Activated B cell treated with CpG ODN at 0.5 μM for 24 hours (primary cell): ENCODE measurements at regions of chr1 and their contacts with region 1.

Region 1: GRCh38 chr1:94463765-94464330 is 45.7 kb downstream of the ABCD3 start:
- DNase-seq: no peak
- ATAC-seq: no peak
- H3K4me3 Mint-ChIP-seq: no peak overlapping the region
- H3K27ac Mint-ChIP-seq: no peak overlapping the region
- H3K4me1 Mint-ChIP-seq: no peaks in the 10 kb centered on the region
- H3K27me3 Mint-ChIP-seq: no peaks in the 10 kb centered on the region
- CTCF ChIP-seq: no peak

Region 2: GRCh38 chr1:93437976-93438605 is 1025.8 kb before region 1 on chr1:
- CTCF ChIA-PET with region 1: no interaction called
- POLR2A ChIA-PET with region 1: no interaction called
- intact Hi-C with region 1: loop called (anchors 5 kb)
- DNase-seq: no peak
- ATAC-seq: peak; percentile 76
- H3K4me3 Mint-ChIP-seq: no peak overlapping the region
- H3K27ac Mint-ChIP-seq: no peak overlapping the region
- H3K4me1 Mint-ChIP-seq: peaks cover 3% of the 10 kb centered on the region
- H3K27me3 Mint-ChIP-seq: peaks cover 3% of the 10 kb centered on the region
- CTCF ChIP-seq: no peak

Region 3: DNA sequence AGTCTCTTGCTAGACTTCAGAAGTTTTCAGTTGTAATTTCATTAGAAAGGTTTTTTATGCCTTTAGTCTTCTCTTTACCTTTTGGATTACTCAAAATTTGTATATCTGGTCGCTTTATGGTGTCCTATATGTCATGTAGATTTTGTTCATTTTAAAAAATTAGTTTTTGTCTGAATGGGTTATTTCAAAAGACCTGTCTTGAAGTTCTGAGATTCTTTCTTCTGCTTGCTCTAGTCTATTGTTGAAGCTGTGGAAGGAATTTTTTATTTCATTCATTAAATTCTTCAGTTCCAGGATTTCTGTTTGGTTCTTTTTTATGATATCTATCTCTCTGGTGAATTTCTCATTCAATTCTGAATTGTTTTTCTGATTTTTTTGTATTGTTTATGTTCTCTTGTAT is 508.1 kb before region 1 on chr1:
- CTCF ChIA-PET with region 1: no interaction called
- POLR2A ChIA-PET with region 1: no interaction called
- intact Hi-C with region 1: no loop called
- DNase-seq: no peak
- ATAC-seq: no peak
- H3K4me3 Mint-ChIP-seq: no peak overlapping the region
- H3K27ac Mint-ChIP-seq: no peak overlapping the region
- H3K4me1 Mint-ChIP-seq: no peaks in the 10 kb centered on the region
- H3K27me3 Mint-ChIP-seq: peaks cover 15% of the 10 kb centered on the region
- CTCF ChIP-seq: no peak

Region 4: DNA sequence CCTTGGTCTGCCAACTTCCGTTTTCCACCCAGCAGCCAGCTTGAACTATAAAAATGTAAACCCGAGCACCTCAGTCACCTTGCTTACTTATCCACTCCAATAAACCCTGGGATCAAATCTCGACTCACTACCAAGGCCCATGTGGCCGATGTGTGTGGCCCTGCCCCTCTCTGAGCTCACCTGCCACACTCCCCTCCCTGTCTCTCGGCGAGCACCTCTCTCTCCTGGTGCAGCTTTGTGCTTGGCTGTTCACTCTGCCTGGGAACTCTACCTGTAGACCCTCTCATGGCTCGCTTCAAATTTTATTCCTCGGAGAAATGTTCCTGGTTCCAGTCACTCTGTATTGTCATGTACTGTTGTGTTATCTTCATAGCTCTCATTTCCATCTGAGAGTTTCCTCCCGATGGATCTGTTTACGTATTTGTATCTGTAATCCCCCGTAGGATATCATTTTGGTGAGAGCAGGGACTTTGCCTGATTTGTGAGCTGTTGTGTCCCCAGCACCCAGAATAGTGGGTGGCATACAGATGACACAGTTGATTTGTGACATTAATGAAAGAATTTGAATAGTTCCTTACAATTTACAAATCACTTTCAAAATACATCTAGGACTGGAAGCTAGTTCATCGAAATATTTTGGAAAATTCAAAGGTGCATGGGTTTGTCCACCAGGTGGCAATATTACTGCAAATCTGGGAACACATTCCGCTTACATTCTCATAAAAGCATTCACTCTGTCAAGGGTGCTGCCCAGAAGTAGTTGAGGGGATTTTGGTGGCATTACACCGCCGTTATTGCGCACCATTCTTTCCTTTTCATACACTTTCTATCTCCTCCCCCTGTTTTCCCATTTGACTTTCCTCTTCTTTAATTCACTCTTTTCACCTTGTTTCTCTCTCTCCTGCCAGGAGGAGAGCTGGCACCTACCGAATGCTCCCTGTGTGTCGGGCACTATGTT is 438.2 kb before region 1 on chr1:
- CTCF ChIA-PET with region 1: interaction called, 6 read pairs
- POLR2A ChIA-PET with region 1: no interaction called
- intact Hi-C with region 1: loop called (anchors 1 kb)
- DNase-seq: no peak
- ATAC-seq: no peak
- H3K4me3 Mint-ChIP-seq: no peak overlapping the region
- H3K27ac Mint-ChIP-seq: no peak overlapping the region
- H3K4me1 Mint-ChIP-seq: no peaks in the 10 kb centered on the region
- H3K27me3 Mint-ChIP-seq: peaks cover 6% of the 10 kb centered on the region
- CTCF ChIP-seq: no peak

Region 5: GRCh38 chr1:94039514-94039870 is 424.4 kb before region 1 on chr1:
- CTCF ChIA-PET with region 1: interaction called, 34 read pairs
- POLR2A ChIA-PET with region 1: no interaction called
- intact Hi-C with region 1: no loop called
- DNase-seq: no peak
- ATAC-seq: no peak
- H3K4me3 Mint-ChIP-seq: no peak overlapping the region
- H3K27ac Mint-ChIP-seq: no peak overlapping the region
- H3K4me1 Mint-ChIP-seq: peaks cover 4% of the 10 kb centered on the region
- H3K27me3 Mint-ChIP-seq: peaks cover 32% of the 10 kb centered on the region
- CTCF ChIP-seq: no peak

Region 6: DNA sequence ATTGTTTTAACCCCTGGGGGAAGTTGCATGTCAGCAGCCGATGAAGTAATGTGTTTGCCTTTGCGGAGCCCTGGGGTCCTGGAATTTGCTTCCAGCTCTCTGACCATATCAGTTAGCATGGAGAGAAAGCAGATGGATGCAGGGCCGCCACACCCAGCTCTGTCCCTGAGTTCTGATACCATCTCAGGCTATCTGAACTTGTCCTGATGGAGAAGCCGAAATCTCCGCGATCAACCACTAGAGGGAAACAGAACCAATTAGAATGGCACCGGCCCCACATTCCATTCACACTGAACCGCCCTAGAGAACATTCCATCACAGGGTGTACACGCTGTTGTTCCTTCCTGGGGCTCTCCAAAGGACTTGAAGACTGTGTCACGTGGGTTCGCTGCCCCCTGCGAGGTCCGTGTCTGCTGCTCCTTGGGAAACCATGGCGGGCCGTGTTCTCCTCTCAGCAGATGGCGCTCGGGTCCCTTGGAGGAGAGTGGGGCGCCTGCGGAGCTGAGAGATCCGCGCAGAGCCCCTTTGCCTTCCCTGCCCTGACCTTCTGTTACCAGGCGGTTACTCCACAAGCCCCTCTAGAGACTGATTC is 418.3 kb before region 1 on chr1:
- CTCF ChIA-PET with region 1: interaction called, 34 read pairs
- POLR2A ChIA-PET with region 1: no interaction called
- intact Hi-C with region 1: loop called (anchors 1 kb)
- DNase-seq: no peak
- ATAC-seq: no peak
- H3K4me3 Mint-ChIP-seq: peak overlapping the region; percentile 46
- H3K27ac Mint-ChIP-seq: no peak overlapping the region
- H3K4me1 Mint-ChIP-seq: peaks cover 9% of the 10 kb centered on the region
- H3K27me3 Mint-ChIP-seq: peaks cover 19% of the 10 kb centered on the region
- CTCF ChIP-seq: no peak

Region 7: DNA sequence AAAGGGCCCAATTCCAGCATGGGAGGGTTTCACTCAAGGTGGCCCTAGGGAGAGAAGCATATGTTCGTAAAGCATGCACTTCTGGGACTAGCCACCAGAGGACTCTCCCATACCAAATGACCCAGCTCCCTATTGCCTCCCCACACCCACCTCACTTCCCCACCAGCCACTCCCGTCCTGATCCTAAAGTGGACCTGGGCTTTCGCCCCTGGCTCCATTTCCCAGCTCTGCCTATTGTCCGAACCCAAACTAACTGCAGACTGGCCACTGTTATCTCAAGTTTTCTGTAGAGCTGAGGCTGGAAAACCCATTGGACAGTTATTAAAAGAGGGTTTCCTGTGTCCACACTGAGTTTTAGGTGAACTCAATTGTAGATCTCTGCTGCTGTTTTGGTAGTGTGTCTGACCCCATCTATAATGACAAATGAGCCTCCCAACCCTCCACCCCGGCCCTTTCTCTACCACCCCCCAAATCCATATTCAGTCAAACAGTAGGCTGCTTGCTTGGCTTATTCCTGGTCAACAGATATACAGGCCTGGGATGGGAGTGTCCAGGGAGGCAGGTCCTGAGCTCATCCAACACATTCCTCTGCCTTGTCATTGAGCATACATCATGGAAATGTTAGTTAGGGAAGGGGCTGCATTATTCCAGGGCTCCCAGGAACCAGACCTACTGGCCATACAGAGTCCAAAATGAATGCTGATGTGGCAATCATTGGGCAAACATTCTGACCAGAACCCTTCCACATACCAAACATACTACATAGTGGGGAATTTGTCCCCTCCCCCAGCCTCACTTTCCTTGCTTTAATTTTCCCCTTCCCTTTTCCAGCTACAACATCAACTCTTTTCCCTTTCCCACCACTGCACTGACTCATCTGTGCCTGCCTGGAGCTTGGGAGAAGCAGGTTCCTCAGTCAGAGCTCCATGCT is 402.1 kb before region 1 on chr1:
- CTCF ChIA-PET with region 1: interaction called, 22 read pairs
- POLR2A ChIA-PET with region 1: no interaction called
- intact Hi-C with region 1: loop called (anchors 1 kb)
- DNase-seq: no peak
- ATAC-seq: peak; percentile 47
- H3K4me3 Mint-ChIP-seq: no peak overlapping the region
- H3K27ac Mint-ChIP-seq: no peak overlapping the region
- H3K4me1 Mint-ChIP-seq: no peaks in the 10 kb centered on the region
- H3K27me3 Mint-ChIP-seq: peaks cover 9% of the 10 kb centered on the region
- CTCF ChIP-seq: no peak

Region 8: DNA sequence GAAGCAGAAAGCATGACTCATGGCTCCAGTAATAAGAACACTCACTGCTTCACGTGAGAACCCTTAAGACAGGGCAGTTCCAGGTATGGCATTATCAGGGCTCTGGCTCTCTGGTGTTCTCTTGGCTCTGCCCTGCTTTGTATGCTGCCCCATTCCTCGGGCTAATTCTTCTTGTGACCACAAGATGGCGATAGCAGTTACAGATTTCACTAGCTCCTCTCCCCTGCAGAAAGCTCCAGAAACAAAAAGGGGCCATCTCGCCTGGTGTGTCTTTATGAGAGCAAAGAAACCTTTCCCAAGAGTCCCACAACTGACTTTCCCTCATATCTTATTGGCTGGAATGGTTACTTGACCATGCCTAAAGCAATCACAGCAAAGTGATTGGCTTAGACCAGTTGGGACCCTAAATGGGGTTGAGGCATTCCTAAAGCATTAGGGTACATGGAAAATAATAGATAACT is 17.7 kb after region 1 on chr1:
- CTCF ChIA-PET with region 1: interaction called, 20 read pairs
- POLR2A ChIA-PET with region 1: no interaction called
- intact Hi-C with region 1: no loop called
- DNase-seq: no peak
- ATAC-seq: peak; percentile 71
- H3K4me3 Mint-ChIP-seq: no peak overlapping the region
- H3K27ac Mint-ChIP-seq: no peak overlapping the region
- H3K4me1 Mint-ChIP-seq: no peaks in the 10 kb centered on the region
- H3K27me3 Mint-ChIP-seq: no peaks in the 10 kb centered on the region
- CTCF ChIP-seq: peak; percentile 66

Region 9: GRCh38 chr1:95340061-95340460 is 876.2 kb after region 1 on chr1:
- CTCF ChIA-PET with region 1: no interaction called
- POLR2A ChIA-PET with region 1: no interaction called
- intact Hi-C with region 1: no loop called
- DNase-seq: no peak
- ATAC-seq: no peak
- H3K4me3 Mint-ChIP-seq: no peak overlapping the region
- H3K27ac Mint-ChIP-seq: no peak overlapping the region
- H3K4me1 Mint-ChIP-seq: no peaks in the 10 kb centered on the region
- H3K27me3 Mint-ChIP-seq: peaks cover 3% of the 10 kb centered on the region
- CTCF ChIP-seq: no peak